ENCODE measurements at regions of chr15 and their contacts with region 1.

Region 1: GRCh38 chr15:89057504-89058133 is 30.6 kb upstream of the ABHD2 start:
- DNase-seq: peak; percentile 84
- ATAC-seq: peak; percentile 93
- H3K4me3 Mint-ChIP-seq: no peak overlapping the region
- H3K27ac Mint-ChIP-seq: no peak overlapping the region
- H3K4me1 Mint-ChIP-seq: peaks cover 6% of the 10 kb centered on the region
- H3K27me3 Mint-ChIP-seq: peaks cover 11% of the 10 kb centered on the region

Region 2: DNA sequence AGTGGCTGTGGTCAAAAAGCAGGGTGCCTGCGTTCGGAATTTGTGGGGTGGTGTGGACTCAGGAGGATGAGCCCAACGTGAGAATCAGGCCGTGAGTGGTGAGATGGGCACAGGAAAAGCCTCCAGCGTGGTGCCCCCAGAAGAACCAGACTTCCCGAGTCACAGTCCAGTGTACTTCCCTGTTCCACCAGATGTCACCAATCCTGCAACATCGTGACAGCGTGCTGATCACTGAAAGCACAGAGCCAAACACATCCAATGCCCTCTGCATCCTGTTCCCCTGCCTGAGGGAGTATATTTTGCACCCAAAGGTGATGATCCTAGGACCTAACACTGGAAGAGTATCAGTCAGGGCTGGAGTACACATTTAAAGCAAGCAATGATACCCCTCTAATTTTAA is 275.1 kb before region 1 on chr15:
- CTCF ChIA-PET with region 1: no interaction called
- DNase-seq: no peak
- ATAC-seq: no peak
- H3K4me3 Mint-ChIP-seq: no peak overlapping the region
- H3K27ac Mint-ChIP-seq: no peak overlapping the region
- H3K4me1 Mint-ChIP-seq: no peaks in the 10 kb centered on the region
- H3K27me3 Mint-ChIP-seq: peaks cover 32% of the 10 kb centered on the region

Region 3: GRCh38 chr15:88970232-88970631 is 87.4 kb before region 1 on chr15:
- CTCF ChIA-PET with region 1: no interaction called
- DNase-seq: no peak
- ATAC-seq: no peak
- H3K4me3 Mint-ChIP-seq: no peak overlapping the region
- H3K27ac Mint-ChIP-seq: no peak overlapping the region
- H3K4me1 Mint-ChIP-seq: no peaks in the 10 kb centered on the region
- H3K27me3 Mint-ChIP-seq: peaks cover 2% of the 10 kb centered on the region

Region 4: GRCh38 chr15:89068325-89068784 is 10.7 kb after region 1 on chr15:
- CTCF ChIA-PET with region 1: interaction called, 16 read pairs
- DNase-seq: peak; percentile 88
- ATAC-seq: peak; percentile 92
- H3K4me3 Mint-ChIP-seq: peak overlapping the region; percentile 2
- H3K27ac Mint-ChIP-seq: peak overlapping the region; percentile 66
- H3K4me1 Mint-ChIP-seq: peaks cover 22% of the 10 kb centered on the region
- H3K27me3 Mint-ChIP-seq: peaks cover 3% of the 10 kb centered on the region

Region 5: DNA sequence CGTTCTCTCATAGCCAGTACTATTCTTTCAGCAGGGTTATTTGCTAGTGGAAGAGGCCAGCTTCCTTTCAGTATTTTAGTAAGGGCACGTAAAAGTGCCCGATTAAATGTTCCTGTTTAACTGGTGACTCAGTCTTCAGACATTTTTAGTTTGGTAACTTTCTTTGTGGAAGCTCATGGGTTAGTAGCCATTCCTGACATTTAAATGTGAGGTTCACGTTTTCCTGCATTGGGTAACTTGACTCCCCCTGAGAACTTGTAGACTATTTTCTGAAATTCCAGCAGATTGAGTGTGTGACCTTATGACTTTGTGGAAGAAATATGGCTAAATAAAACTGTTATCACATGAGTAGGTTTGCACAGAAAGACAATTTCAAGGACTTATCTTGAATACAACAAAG is 47.5 kb after region 1 on chr15:
- CTCF ChIA-PET with region 1: interaction called, 10 read pairs
- DNase-seq: no peak
- ATAC-seq: no peak
- H3K4me3 Mint-ChIP-seq: no peak overlapping the region
- H3K27ac Mint-ChIP-seq: no peak overlapping the region
- H3K4me1 Mint-ChIP-seq: peaks cover 6% of the 10 kb centered on the region
- H3K27me3 Mint-ChIP-seq: no peaks in the 10 kb centered on the region

Region 6: GRCh38 chr15:89129123-89129815 is 71.7 kb after region 1 on chr15:
- CTCF ChIA-PET with region 1: interaction called, 52 read pairs
- DNase-seq: peak; percentile 61
- ATAC-seq: no peak
- H3K4me3 Mint-ChIP-seq: no peak overlapping the region
- H3K27ac Mint-ChIP-seq: no peak overlapping the region
- H3K4me1 Mint-ChIP-seq: peaks cover 40% of the 10 kb centered on the region
- H3K27me3 Mint-ChIP-seq: no peaks in the 10 kb centered on the region

Region 7: GRCh38 chr15:89171136-89172072 is 113.8 kb after region 1 on chr15:
- CTCF ChIA-PET with region 1: interaction called, 193 read pairs
- DNase-seq: peak; percentile 47
- ATAC-seq: no peak
- H3K4me3 Mint-ChIP-seq: no peak overlapping the region
- H3K27ac Mint-ChIP-seq: no peak overlapping the region
- H3K4me1 Mint-ChIP-seq: peaks cover 18% of the 10 kb centered on the region
- H3K27me3 Mint-ChIP-seq: no peaks in the 10 kb centered on the region